ENCODE measurements at regions of chr4 and their contacts with region 1.

Region 1: GRCh38 chr4:83012687-83013419 is 2.2 kb upstream of the LIN54 start:
- DNase-seq: peak; percentile 92 to 99 (median 98)

Region 2: GRCh38 chr4:82885410-82885809 is 127.4 kb before region 1 on chr4:
- intact Hi-C with region 1: no loop called
- DNase-seq: no peak

Region 3: GRCh38 chr4:82900331-82901128 is 112.3 kb before region 1 on chr4 and contains the start of gene THAP9:
- intact Hi-C with region 1: loop called (anchors 5 kb)
- DNase-seq: peak; percentile 96 to 100 (median 99)